Heart left ventricle (tissue), 16 donors: ENCODE measurements at regions of chr13 and their contacts with region 1.

Region 1: DNA sequence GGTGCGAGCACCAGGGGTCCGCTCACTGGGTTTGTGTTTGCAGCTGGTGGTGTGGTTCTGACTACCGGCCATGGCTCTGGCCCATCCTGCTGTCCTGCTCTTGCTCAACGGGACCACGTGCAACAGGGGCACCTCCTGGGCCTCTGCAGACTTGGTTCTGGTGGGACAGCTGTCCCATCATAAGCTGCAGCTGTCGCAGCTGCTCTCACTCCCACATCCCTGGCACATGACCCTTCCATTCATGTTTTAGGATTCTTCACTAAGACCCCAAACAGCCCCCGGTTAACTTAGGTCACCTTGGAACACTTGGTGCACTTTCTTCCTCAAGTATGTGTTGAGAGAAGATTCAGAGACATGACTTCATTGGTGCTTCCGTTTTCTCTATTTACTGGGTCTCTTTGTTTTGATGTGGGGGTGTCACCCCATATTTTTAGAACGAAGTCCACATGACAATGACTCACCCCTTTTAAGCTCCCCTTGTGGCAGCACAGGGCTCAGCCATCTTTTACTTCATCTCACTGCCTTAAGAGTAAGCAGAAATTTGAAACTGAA is 68.4 kb upstream of the ARHGEF7 start:
- DNase-seq: peak in 4 of 5 donors; percentile 48 to 59 (median 56)
- ATAC-seq: peak; percentile 39 to 79 (median 66)
- H3K4me3 ChIP-seq: no peak overlapping the region
- H3K27ac ChIP-seq: peak overlapping the region in 6 of 12 donors; percentile 32 to 71 (median 62)
- H3K4me1 ChIP-seq: peaks cover 0 to 20% (median 7%) of the 10 kb centered on the region in 12 donors
- H3K27me3 ChIP-seq: no peaks in the 10 kb centered on the region
- CTCF ChIP-seq: peak in 8 of 12 donors; percentile 12 to 38 (median 26)
- POLR2A ChIP-seq: no peak

Region 2: GRCh38 chr13:110593430-110594130 is 453.1 kb before region 1 on chr13:
- intact Hi-C with region 1: loop called in 8 of 10 experiments (anchors 5 to 10 kb)
- DNase-seq: no peak
- ATAC-seq: peak; percentile 81 to 94 (median 82)
- H3K4me3 ChIP-seq: no peak overlapping the region
- H3K27ac ChIP-seq: no peak overlapping the region
- H3K4me1 ChIP-seq: peaks cover 0 to 5% (median 0%) of the 10 kb centered on the region in 12 donors
- H3K27me3 ChIP-seq: no peaks in the 10 kb centered on the region
- CTCF ChIP-seq: peak; percentile 53 to 76 (median 64)
- POLR2A ChIP-seq: no peak

Region 3: GRCh38 chr13:111006506-111007031 is 40.1 kb before region 1 on chr13:
- intact Hi-C with region 1: loop called in 1 of 10 experiments (anchors 5 kb)
- DNase-seq: peak; percentile 84 to 92 (median 88)
- ATAC-seq: peak; percentile 93 to 97 (median 96)
- H3K4me3 ChIP-seq: peak overlapping the region in 4 of 12 donors; percentile 1 to 15 (median 5)
- H3K27ac ChIP-seq: peak overlapping the region; percentile 70 to 93 (median 88)
- H3K4me1 ChIP-seq: peaks cover 3 to 37% (median 23%) of the 10 kb centered on the region in 12 donors
- H3K27me3 ChIP-seq: no peaks in the 10 kb centered on the region
- CTCF ChIP-seq: no peak
- POLR2A ChIP-seq: no peak

Region 4: DNA sequence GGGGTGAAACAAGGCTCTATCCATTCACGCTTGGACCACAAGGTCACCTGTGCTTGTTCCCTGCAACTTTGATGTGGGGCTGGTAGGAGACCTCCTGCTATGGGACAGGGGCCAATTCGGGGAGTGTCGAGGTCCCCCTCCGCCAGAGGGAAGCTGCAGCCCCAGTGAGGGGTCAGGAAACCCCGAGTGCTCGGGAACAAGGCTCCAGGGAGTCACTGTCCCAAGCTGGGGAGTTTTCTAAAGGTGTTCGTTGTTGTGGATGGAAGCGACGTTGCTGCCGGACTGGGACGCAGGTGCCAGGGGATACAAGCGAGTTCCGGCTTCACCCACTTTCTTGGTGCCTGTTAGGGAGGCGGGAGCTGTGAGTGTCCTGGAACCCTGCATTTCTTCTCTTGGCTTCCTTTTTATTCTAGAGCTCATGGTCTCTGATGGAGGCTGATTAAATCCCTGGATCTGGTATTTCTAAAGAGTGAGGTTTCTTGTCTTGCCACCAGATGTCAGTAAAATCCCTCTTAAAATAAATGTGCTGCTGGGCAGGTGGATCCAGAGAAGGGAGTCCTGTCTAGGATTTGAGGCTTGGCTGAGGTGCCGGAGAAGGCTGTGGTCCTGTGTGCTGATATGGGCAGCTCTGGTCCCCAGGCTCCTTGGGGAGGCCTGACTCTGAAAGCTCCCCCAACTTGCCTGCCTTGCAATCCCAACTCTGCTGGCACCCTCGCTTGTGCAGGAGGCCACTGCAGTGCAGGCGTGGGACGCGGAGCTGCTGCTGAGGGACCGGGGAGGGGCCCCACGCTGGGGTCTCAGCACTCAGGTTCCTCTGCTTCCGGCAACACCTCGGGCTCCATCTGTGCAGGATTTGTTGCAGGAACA is 427.7 kb after region 1 on chr13:
- intact Hi-C with region 1: no loop called
- DNase-seq: no peak
- ATAC-seq: peak in 3 of 4 donors; percentile 32 to 62 (median 48)
- H3K4me3 ChIP-seq: no peak overlapping the region
- H3K27ac ChIP-seq: no peak overlapping the region
- H3K4me1 ChIP-seq: no peaks in the 10 kb centered on the region
- H3K27me3 ChIP-seq: peaks cover 0 to 17% (median 3%) of the 10 kb centered on the region in 9 donors
- CTCF ChIP-seq: peak; percentile 32 to 69 (median 58)
- POLR2A ChIP-seq: no peak